KBM-7 (cell line): ENCODE measurements at regions of chr11 and their contacts with region 1.

Region 1: DNA sequence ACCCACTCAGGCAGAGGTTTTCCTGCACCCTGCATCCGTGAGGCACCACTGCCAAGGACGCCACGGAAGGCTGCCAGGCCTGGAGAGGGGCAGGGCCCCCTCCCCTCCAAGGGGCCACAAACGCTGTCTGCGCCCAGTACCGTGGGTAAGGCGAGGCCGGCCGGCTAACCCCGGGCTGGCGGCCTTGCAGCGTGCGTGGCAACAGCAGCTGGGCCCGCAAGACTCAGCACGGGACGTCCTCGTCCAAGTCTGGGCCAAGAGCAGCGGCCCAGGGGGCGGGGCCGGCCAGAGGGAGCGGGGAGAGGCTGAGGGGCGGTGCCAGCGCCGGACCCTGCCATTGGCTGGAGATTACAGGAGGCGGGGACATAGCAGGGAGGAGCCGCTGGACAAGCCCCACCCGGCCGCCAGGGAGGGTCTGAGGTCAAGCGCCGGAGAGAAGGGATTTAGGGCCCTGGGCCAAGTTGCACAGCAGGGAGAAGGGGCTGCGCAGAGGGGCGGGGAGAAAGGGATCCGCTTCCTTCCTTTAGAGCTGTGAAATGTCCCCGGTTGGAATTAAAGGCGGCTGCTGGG is 16.0 kb downstream of the SLC43A1 start:
- DNase-seq: no peak

Region 2: GRCh38 chr11:57597916-57598830 is 98.7 kb after region 1 on chr11:
- in situ Hi-C with region 1: loop called (anchors 25 kb)
- DNase-seq: no peak

Region 3: DNA sequence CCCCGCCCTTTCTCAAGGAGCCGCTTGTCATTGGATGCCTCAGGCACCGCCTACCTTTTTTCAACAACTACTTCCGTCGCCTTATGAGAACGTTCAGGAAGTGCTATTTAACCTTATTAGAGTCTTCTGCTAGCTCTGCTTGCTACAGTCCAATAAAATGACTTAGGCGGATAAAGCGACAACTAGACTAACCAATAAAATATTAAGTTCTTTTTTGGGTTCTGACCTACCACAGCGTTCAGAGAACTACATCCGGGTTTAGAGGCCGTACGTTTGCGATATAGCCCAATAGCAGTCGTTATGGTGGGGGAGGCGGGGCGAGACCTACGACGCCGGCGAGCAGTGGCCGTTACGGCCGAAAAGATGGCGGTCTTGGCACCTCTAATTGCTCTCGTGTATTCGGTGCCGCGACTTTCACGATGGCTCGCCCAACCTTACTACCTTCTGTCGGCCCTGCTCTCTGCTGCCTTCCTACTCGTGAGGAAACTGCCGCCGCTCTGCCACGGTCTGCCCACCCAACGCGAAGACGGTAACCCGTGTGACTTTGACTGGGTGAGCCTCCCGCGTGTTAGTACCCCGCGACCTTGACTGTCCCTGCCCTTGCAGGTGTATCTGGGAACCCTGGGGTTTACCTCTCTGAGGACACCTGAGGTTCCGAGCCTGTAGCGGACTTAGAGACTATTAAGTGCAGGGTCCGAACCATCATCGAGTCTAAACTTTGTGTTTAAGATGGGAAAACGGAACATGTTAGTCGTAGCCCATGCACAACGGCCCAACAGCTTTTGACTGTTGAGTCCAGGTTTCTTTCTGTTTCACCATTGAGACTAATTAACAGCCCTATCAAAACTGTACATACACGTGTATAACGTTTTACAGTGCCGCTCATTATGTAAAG is 213.0 kb after region 1 on chr11 and contains the start of gene TMX2:
- in situ Hi-C with region 1: no loop called
- DNase-seq: peak; percentile 97